ENCODE measurements at regions of chr2 and their contacts with region 1.

Region 1: GRCh38 chr2:62303788-62304187 is 107.9 kb downstream of the B3GNT2 start:
- DNase-seq: no peak
- CTCF ChIP-seq: no peak

Region 2: DNA sequence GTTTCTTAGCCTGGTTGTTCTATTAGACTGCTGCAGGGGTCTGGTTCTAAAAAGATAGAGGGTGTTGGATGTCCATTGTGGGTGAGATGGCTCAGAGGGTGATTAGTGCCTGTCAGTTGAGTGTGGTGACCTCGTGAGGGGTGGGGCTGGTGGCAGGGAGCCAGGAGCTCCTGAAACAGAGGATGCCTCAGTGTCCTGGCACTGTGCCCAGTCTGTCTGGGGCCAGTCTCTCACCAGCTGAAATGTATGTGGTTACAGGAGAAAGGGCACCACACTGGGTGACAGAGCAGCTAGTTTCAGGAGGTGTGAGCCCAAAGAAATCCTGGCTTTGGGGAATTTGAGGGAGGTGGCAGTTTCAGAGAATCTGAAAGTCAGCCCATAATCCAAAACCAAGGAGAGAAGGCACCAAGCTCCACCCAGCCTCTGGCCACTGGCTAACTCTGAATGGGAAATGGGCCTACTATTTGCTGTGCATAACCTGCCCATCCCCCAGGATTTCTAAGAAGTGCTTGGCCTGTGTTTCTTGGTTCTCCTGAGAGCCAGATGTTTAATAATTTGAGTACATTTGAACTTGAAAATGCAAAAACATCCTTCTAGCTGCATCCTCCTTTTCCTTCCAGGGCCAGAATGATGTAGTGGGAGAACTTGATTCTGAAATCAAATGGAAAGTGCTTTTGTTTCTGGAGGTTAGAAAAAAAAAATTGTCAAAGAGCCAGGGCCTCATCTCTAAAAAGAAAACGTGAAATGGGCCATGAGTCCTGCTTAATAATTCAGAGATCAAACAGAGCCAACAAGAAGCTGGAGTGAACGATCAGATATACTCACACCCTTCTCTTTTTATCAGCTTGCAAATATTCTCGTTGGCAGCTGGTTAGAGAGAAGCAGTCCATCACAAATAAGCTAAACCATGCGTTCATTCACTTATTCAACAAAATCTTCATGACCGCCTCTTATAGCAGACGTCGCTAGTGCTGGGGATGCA is 15.6 kb before region 1 on chr2:
- CTCF ChIA-PET with region 1: interaction called, 18 read pairs
- POLR2A ChIA-PET with region 1: interaction called, 3 read pairs
- DNase-seq: peak; percentile 32
- CTCF ChIP-seq: no peak

Region 3: DNA sequence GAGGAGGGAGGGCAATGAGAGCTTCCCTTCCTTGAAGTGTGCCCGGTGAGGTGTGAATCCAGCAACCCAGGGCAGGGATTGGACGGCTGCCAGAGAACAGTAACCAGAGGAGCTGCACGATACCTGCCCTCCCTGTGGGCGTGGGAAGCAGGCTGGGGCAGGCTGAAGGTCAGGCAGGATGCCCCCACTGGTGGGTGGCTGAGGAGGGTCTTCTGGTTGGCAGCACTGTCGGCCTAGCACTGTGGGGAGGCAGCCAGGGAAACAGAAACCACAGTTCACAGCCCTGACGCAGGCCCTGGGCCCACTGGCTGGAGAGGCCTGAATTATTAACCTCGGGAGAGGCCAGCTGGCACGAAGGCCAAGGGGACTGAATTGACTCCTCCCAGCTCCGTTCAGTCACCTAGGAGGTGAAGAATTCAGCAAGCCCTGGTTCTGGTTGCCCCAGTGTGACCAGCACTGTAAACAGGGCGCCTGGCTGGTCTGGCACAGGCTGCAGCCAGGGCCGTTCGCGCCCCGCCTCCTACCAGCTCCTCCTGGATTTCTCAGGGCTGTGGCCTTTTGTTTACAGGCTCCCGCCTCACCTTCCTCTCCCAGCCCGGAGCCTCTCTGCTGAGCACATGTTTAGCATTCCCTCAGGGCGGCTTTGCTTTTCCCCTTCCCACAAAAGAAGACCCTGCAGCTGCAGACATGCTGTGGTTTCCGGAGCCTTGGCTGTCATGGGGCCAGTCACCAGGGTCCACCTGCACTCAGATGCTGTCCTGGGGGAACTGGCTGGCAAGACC is 10.1 kb before region 1 on chr2:
- CTCF ChIA-PET with region 1: interaction called, 18 read pairs
- POLR2A ChIA-PET with region 1: interaction called, 6 read pairs
- DNase-seq: no peak
- CTCF ChIP-seq: no peak

Region 4: GRCh38 chr2:62334440-62335058 is 30.8 kb after region 1 on chr2:
- CTCF ChIA-PET with region 1: interaction called, 16 read pairs
- POLR2A ChIA-PET with region 1: interaction called, 11 read pairs
- DNase-seq: peak; percentile 40
- CTCF ChIP-seq: no peak

Measured in GM10248 (cell line).